ENCODE measurements at regions of chr10 and their contacts with region 1.

Region 1: GRCh38 chr10:50417886-50418830 is 166.8 kb upstream of the ASAH2 start:
- DNase-seq: peak; percentile 63
- ATAC-seq: peak; percentile 84
- H3K4me3 ChIP-seq: peak overlapping the region; percentile 64
- H3K27ac ChIP-seq: peak overlapping the region; percentile 79
- H3K4me1 ChIP-seq: peaks cover 28% of the 10 kb centered on the region
- H3K27me3 ChIP-seq: no peaks in the 10 kb centered on the region
- CTCF ChIP-seq: peak in 1 of 3 experiments; percentile 17; a peak in 1 of 6 replicates
- EP300 ChIP-seq: peak in 1 of 2 experiments; percentile 34; a peak in 1 of 4 replicates
- POLR2A ChIP-seq: peak; percentile 77
- RAD21 ChIP-seq: no peak

Region 2: DNA sequence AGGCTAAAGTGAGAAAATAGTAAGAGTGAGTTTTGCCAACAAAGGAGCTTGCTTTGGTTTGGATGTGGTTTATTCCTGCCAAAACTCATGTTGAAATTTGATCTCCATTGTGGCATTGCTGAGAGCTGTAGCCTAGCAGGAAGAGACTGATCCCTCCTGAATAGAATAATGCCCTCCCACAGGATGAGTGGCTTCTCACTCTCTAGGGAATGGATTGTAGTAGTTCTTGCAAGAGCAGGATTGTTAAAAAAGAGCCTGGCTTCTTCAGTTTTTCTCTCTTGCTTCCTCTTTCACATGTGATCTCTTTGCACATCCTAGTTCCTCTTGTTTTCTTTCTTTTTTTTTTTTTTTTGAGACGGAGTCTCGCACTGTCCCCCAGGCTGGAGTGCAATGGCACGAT is 201.3 kb before region 1 on chr10:
- CTCF ChIA-PET with region 1: no interaction called
- POLR2A ChIA-PET with region 1: no interaction called
- RAD21 ChIA-PET with region 1: no interaction called
- SMC1A ChIA-PET with region 1: no interaction called
- in situ Hi-C with region 1: no loop called
- intact Hi-C with region 1: no loop called
- DNase-seq: no peak
- ATAC-seq: peak; percentile 44
- H3K4me3 ChIP-seq: no peak overlapping the region
- H3K27ac ChIP-seq: no peak overlapping the region
- H3K4me1 ChIP-seq: no peaks in the 10 kb centered on the region
- H3K27me3 ChIP-seq: no peaks in the 10 kb centered on the region
- CTCF ChIP-seq: no peak
- EP300 ChIP-seq: no peak
- POLR2A ChIP-seq: no peak
- RAD21 ChIP-seq: no peak

Region 3: DNA sequence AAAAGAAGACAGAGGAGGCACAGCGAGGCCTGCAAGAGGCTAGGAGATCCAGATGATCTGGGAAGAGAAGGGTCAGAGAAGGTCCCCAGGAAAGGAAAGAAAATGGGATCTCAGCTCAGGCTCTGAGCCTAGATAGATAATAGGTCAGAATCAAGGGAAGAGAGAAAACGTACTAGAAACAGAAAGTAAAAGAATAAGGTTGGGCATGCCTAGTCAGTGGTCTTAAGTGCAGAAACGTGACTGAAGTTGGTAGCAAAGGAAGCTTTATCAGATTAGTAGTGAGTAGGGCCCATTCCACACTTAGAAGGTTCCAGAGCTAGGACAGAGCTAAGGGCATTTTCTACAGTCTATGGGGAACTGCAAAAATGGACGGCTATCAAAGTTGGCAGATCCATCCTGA is 82.0 kb before region 1 on chr10:
- CTCF ChIA-PET with region 1: interaction called, 4 read pairs
- POLR2A ChIA-PET with region 1: no interaction called
- RAD21 ChIA-PET with region 1: interaction called, 11 read pairs
- SMC1A ChIA-PET with region 1: interaction called, 14 read pairs
- in situ Hi-C with region 1: no loop called
- intact Hi-C with region 1: no loop called
- DNase-seq: no peak
- ATAC-seq: peak; percentile 67
- H3K4me3 ChIP-seq: no peak overlapping the region
- H3K27ac ChIP-seq: peak overlapping the region; percentile 4; the same call in 1 of the 2 replicates
- H3K4me1 ChIP-seq: no peaks in the 10 kb centered on the region
- H3K27me3 ChIP-seq: no peaks in the 10 kb centered on the region
- CTCF ChIP-seq: no peak
- EP300 ChIP-seq: no peak
- POLR2A ChIP-seq: no peak
- RAD21 ChIP-seq: no peak

Region 4: GRCh38 chr10:50362547-50363125 is 55.5 kb before region 1 on chr10:
- CTCF ChIA-PET with region 1: interaction called, 21 read pairs
- POLR2A ChIA-PET with region 1: interaction called, 3 read pairs
- RAD21 ChIA-PET with region 1: interaction called, 14 read pairs
- SMC1A ChIA-PET with region 1: interaction called, 27 read pairs
- in situ Hi-C with region 1: no loop called
- intact Hi-C with region 1: loop called (anchors 5 kb)
- DNase-seq: peak; percentile 79
- ATAC-seq: peak; percentile 90
- H3K4me3 ChIP-seq: peak overlapping the region; percentile 36
- H3K27ac ChIP-seq: peak overlapping the region; percentile 88
- H3K4me1 ChIP-seq: peaks cover 25% of the 10 kb centered on the region
- H3K27me3 ChIP-seq: no peaks in the 10 kb centered on the region
- CTCF ChIP-seq: no peak
- EP300 ChIP-seq: peak in 1 of 2 experiments; percentile 50; a peak in 1 of 4 replicates
- POLR2A ChIP-seq: no peak
- RAD21 ChIP-seq: no peak

Region 5: GRCh38 chr10:50385624-50386023 is 32.5 kb before region 1 on chr10:
- CTCF ChIA-PET with region 1: interaction called, 9 read pairs
- POLR2A ChIA-PET with region 1: no interaction called
- RAD21 ChIA-PET with region 1: interaction called, 6 read pairs
- SMC1A ChIA-PET with region 1: interaction called, 17 read pairs
- in situ Hi-C with region 1: no loop called
- intact Hi-C with region 1: no loop called
- DNase-seq: no peak
- ATAC-seq: no peak
- H3K4me3 ChIP-seq: no peak overlapping the region
- H3K27ac ChIP-seq: no peak overlapping the region
- H3K4me1 ChIP-seq: peaks cover 29% of the 10 kb centered on the region
- H3K27me3 ChIP-seq: no peaks in the 10 kb centered on the region
- CTCF ChIP-seq: no peak
- EP300 ChIP-seq: no peak
- POLR2A ChIP-seq: no peak
- RAD21 ChIP-seq: no peak

Region 6: DNA sequence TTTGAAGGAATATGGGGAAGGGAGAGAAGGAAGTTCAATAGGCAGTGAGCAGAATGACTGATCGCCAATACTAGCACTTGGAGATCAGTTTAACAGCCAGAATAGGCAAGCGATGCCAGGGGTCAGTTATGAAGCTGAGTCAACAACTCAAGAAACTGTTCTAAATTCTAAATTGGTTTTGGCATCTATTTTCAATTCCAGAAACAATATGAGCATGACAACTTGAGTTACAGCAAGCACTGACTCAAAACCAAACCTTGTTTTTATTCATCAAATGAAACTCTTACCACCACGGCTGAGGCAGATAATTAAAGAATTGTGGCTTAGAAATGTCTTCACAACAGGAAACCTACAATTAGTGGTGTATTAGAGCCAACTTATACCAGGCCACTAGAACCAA is 13.6 kb after region 1 on chr10:
- CTCF ChIA-PET with region 1: interaction called, 6 read pairs
- POLR2A ChIA-PET with region 1: interaction called, 6 read pairs
- RAD21 ChIA-PET with region 1: interaction called, 15 read pairs
- SMC1A ChIA-PET with region 1: interaction called, 49 read pairs
- in situ Hi-C with region 1: no loop called
- intact Hi-C with region 1: no loop called
- DNase-seq: peak; percentile 96
- ATAC-seq: peak; percentile 89
- H3K4me3 ChIP-seq: peak overlapping the region; percentile 45; the same call in 1 of the 2 replicates
- H3K27ac ChIP-seq: peak overlapping the region; percentile 80; the same call in 1 of the 2 replicates
- H3K4me1 ChIP-seq: peaks cover 25% of the 10 kb centered on the region
- H3K27me3 ChIP-seq: no peaks in the 10 kb centered on the region
- CTCF ChIP-seq: no peak
- EP300 ChIP-seq: peak; percentile 99
- POLR2A ChIP-seq: no peak
- RAD21 ChIP-seq: no peak; the same call in 1 of the 2 replicates

Region 7: GRCh38 chr10:50452603-50453002 is 34.4 kb after region 1 on chr10:
- CTCF ChIA-PET with region 1: interaction called, 6 read pairs
- POLR2A ChIA-PET with region 1: interaction called, 6 read pairs
- RAD21 ChIA-PET with region 1: interaction called, 4 read pairs
- SMC1A ChIA-PET with region 1: interaction called, 14 read pairs
- in situ Hi-C with region 1: no loop called
- intact Hi-C with region 1: no loop called
- DNase-seq: no peak
- ATAC-seq: peak; percentile 57
- H3K4me3 ChIP-seq: peak overlapping the region; percentile 7; the same call in 1 of the 2 replicates
- H3K27ac ChIP-seq: peak overlapping the region; percentile 77
- H3K4me1 ChIP-seq: peaks cover 42% of the 10 kb centered on the region
- H3K27me3 ChIP-seq: no peaks in the 10 kb centered on the region
- CTCF ChIP-seq: no peak
- EP300 ChIP-seq: peak; percentile 65 to 67; a peak in 2 of 4 replicates
- POLR2A ChIP-seq: no peak
- RAD21 ChIP-seq: no peak

Region 8: DNA sequence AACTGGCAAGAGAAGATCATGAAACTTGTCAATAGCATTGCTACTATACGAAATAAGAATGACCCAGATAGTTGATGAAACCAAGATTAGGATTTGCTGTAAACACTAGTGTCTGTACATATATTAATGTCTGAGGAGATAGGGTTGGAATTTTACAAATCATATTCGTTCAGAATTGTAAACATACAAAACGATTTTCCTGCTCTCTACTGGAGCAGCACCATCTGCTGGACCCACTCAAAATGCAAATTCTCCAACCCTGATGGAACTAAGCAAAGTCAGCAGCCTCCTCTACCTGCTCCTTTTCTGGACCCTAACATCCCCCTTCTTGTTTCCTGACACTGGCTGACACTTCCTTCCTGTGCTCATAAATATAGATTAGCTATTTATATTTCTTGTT is 235.0 kb after region 1 on chr10:
- CTCF ChIA-PET with region 1: interaction called, 6 read pairs
- POLR2A ChIA-PET with region 1: interaction called, 3 read pairs
- RAD21 ChIA-PET with region 1: interaction called, 3 read pairs
- SMC1A ChIA-PET with region 1: interaction called, 11 read pairs
- in situ Hi-C with region 1: no loop called
- intact Hi-C with region 1: no loop called
- DNase-seq: no peak
- ATAC-seq: peak; percentile 27
- H3K4me3 ChIP-seq: no peak overlapping the region
- H3K27ac ChIP-seq: no peak overlapping the region
- H3K4me1 ChIP-seq: peaks cover 28% of the 10 kb centered on the region
- H3K27me3 ChIP-seq: no peaks in the 10 kb centered on the region
- CTCF ChIP-seq: peak; percentile 16 to 66 (median 53); a peak in 4 of 6 replicates
- EP300 ChIP-seq: no peak
- POLR2A ChIP-seq: no peak
- RAD21 ChIP-seq: peak; percentile 45

Region 9: DNA sequence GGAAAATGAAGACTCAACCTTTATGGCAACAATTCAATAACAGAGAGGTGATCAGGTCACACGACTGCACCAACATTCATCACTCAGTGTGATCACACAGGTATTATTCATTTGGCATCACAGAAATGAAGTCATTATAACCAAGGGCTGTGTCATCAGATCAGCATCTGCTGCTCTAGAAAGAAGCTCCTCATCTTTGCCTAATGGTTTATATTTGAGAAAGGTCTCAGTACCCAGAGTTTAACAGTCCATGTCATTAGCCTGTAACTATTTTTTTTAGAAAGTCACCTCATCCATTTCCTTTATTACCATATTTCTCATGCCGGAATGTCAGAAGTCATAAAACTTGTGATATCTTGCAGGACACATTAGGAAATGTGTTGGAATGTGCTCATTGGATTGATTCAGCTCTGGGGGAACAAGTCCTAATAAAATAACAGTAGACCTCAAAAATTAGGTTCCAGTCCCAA is 611.0 kb after region 1 on chr10:
- CTCF ChIA-PET with region 1: no interaction called
- POLR2A ChIA-PET with region 1: no interaction called
- RAD21 ChIA-PET with region 1: no interaction called
- SMC1A ChIA-PET with region 1: no interaction called
- in situ Hi-C with region 1: no loop called
- intact Hi-C with region 1: no loop called
- DNase-seq: no peak
- ATAC-seq: no peak
- H3K4me3 ChIP-seq: no peak overlapping the region
- H3K27ac ChIP-seq: no peak overlapping the region
- H3K4me1 ChIP-seq: no peaks in the 10 kb centered on the region
- H3K27me3 ChIP-seq: no peaks in the 10 kb centered on the region; a peak in 1 of 4 replicates
- CTCF ChIP-seq: no peak
- EP300 ChIP-seq: no peak
- POLR2A ChIP-seq: no peak
- RAD21 ChIP-seq: no peak